ENCODE measurements at regions of chr7 and their contacts with region 1.

Region 1: DNA sequence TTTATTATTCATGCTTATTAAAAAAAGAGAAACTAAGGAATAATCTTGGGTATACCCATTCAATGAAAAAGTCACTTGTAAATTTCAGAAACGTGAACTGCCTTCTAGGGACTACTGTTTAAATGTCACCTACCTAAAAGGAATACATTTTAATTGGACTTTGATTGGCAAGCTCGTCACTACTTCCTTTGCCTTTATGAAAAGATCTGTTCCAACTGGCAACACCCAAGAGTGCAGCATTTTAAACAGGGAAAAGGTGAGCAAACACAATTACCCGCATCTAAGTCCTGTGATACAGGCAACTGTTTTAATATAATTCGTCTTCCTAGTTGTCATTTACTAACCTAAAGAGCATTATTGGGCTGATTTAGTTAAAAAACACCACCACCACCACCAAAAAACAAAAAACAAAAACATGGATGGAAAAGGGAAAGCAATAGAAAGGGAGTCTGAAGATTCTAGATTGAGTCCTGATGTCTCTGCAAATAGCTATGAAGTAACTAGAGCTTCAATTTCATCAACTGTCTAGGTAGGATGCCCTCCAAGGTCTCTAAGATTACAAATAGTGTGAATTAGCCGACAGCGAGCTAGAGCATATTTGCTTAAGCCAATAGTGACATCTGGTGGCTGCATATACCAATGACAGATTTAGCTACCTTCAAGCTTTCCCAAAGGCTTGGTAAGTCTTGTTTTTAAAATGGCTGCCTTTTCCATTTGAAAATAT is 33.8 kb upstream of the ICA1 start:
- DNase-seq: peak in 1 of 2 donors; percentile 53
- ATAC-seq: peak; percentile 86 to 96 (median 89)
- H3K4me3 ChIP-seq: no peak overlapping the region
- H3K27ac ChIP-seq: no peak overlapping the region
- H3K4me1 ChIP-seq: peaks cover 0 to 2% (median 0%) of the 10 kb centered on the region in 9 donors
- H3K27me3 ChIP-seq: no peaks in the 10 kb centered on the region
- CTCF ChIP-seq: peak; percentile 55 to 88 (median 79)

Region 2: GRCh38 chr7:7424151-7424873 is 871.5 kb before region 1 on chr7:
- intact Hi-C with region 1: loop called in 1 of 10 experiments (anchors 10 kb)
- DNase-seq: peak; percentile 18 to 69
- ATAC-seq: peak; percentile 69 to 89 (median 82)
- H3K4me3 ChIP-seq: peak overlapping the region in 9 of 10 donors; percentile 16 to 62 (median 52)
- H3K27ac ChIP-seq: peak overlapping the region in 4 of 10 donors; percentile 10 to 48 (median 28)
- H3K4me1 ChIP-seq: peaks cover 0 to 8% (median 0%) of the 10 kb centered on the region in 9 donors
- H3K27me3 ChIP-seq: peaks cover 0 to 5% (median 0%) of the 10 kb centered on the region in 7 donors
- CTCF ChIP-seq: peak; percentile 46 to 89 (median 77)

Region 3: GRCh38 chr7:7595451-7595850 is 700.3 kb before region 1 on chr7:
- intact Hi-C with region 1: loop called in 1 of 10 experiments (anchors 5 kb)
- DNase-seq: no peak
- ATAC-seq: peak in 1 of 8 donors; percentile 41
- H3K4me3 ChIP-seq: no peak overlapping the region
- H3K27ac ChIP-seq: no peak overlapping the region
- H3K4me1 ChIP-seq: no peaks in the 10 kb centered on the region
- H3K27me3 ChIP-seq: no peaks in the 10 kb centered on the region
- CTCF ChIP-seq: peak in 7 of 9 donors; percentile 38 to 60 (median 48)

Region 4: GRCh38 chr7:7681179-7681935 is 614.4 kb before region 1 on chr7:
- intact Hi-C with region 1: loop called in 1 of 10 experiments (anchors 5 kb)
- DNase-seq: peak in 1 of 2 donors; percentile 81
- ATAC-seq: peak in 7 of 8 donors; percentile 77 to 95 (median 91)
- H3K4me3 ChIP-seq: peak overlapping the region in 4 of 10 donors; percentile 6 to 13 (median 7)
- H3K27ac ChIP-seq: peak overlapping the region; percentile 7 to 77 (median 46)
- H3K4me1 ChIP-seq: peaks cover 0 to 35% (median 24%) of the 10 kb centered on the region in 9 donors
- H3K27me3 ChIP-seq: no peaks in the 10 kb centered on the region
- CTCF ChIP-seq: peak; percentile 56 to 85 (median 73)

Region 5: GRCh38 chr7:7761340-7761980 is 534.3 kb before region 1 on chr7:
- intact Hi-C with region 1: loop called in 3 of 10 experiments (anchors 5 to 10 kb)
- DNase-seq: no peak
- ATAC-seq: peak in 7 of 8 donors; percentile 37 to 74 (median 68)
- H3K4me3 ChIP-seq: peak overlapping the region in 9 of 10 donors; percentile 23 to 61 (median 51)
- H3K27ac ChIP-seq: peak overlapping the region; percentile 21 to 86 (median 72)
- H3K4me1 ChIP-seq: peaks cover 0 to 28% (median 11%) of the 10 kb centered on the region in 9 donors
- H3K27me3 ChIP-seq: no peaks in the 10 kb centered on the region
- CTCF ChIP-seq: peak; percentile 21 to 74 (median 57)

Region 6: GRCh38 chr7:8232999-8233847 is 62.6 kb before region 1 on chr7:
- intact Hi-C with region 1: loop called in 3 of 10 experiments (anchors 5 kb)
- DNase-seq: peak in 1 of 2 donors; percentile 23
- ATAC-seq: peak; percentile 63 to 96 (median 91)
- H3K4me3 ChIP-seq: no peak overlapping the region
- H3K27ac ChIP-seq: peak overlapping the region in 6 of 10 donors; percentile 6 to 65 (median 46)
- H3K4me1 ChIP-seq: peaks cover 0 to 35% (median 7%) of the 10 kb centered on the region in 9 donors
- H3K27me3 ChIP-seq: no peaks in the 10 kb centered on the region
- CTCF ChIP-seq: no peak

Region 7: GRCh38 chr7:8261711-8262695 is 33.8 kb before region 1 on chr7 and contains the start of gene ICA1:
- intact Hi-C with region 1: loop called in 1 of 10 experiments (anchors 5 kb)
- DNase-seq: peak; percentile 74 to 80
- ATAC-seq: peak; percentile 87 to 95 (median 92)
- H3K4me3 ChIP-seq: peak within 1 kb of the TSS; percentile 72 to 93 (median 85)
- H3K27ac ChIP-seq: peak within 1 kb of the TSS; percentile 88 to 98 (median 98)
- H3K4me1 ChIP-seq: peaks cover 0 to 27% (median 9%) of the 10 kb centered on the region in 9 donors
- H3K27me3 ChIP-seq: peaks cover 0 to 24% (median 0%) of the 10 kb centered on the region in 7 donors
- CTCF ChIP-seq: peak in 2 of 9 donors; percentile 22 to 25
- total RNA-seq, gene ICA1: 41.3 to 92.1 (median 62.3) TPM

Region 8: GRCh38 chr7:8325063-8325462 is 29.3 kb after region 1 on chr7:
- intact Hi-C with region 1: no loop called
- DNase-seq: no peak
- ATAC-seq: no peak
- H3K4me3 ChIP-seq: no peak overlapping the region
- H3K27ac ChIP-seq: no peak overlapping the region
- H3K4me1 ChIP-seq: no peaks in the 10 kb centered on the region
- H3K27me3 ChIP-seq: peaks cover 0 to 7% (median 0%) of the 10 kb centered on the region in 7 donors
- CTCF ChIP-seq: no peak

Measured in heart right ventricle (tissue), 16 donors.